Right ventricle myocardium superior (tissue), 1 donor: ENCODE measurements at regions of chr2 and their contacts with region 1.

Region 1: GRCh38 chr2:233251306-233252116 is at the start of gene ATG16L1:
- DNase-seq: peak; percentile 98
- ATAC-seq: peak; percentile 100
- total RNA-seq, gene ATG16L1: 17.9 TPM

Region 2: GRCh38 chr2:232609607-232610006 is 641.9 kb before region 1 on chr2:
- intact Hi-C with region 1: loop called (anchors 5 kb)
- DNase-seq: no peak
- ATAC-seq: no peak

Region 3: DNA sequence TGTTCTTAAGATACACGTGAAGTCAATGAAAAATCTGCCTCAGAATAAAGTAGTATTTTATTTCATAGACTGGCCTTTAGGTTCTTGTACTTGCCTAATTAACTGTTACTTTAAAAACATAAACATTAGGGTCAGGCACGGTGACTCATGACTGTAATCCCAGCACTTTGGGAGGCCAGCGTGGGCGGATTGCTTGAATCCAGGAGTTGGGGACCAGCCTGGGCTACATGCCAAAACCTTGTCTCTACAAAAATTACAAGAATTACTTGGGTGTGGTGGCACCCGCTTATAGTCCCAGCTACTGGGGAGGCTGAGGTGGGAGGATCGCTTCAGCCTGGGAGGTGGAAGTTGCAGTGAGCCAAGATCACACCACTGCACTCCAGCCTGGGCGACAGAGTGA is 397.4 kb before region 1 on chr2:
- intact Hi-C with region 1: loop called (anchors 10 kb)
- DNase-seq: no peak
- ATAC-seq: no peak